ENCODE measurements at regions of chr1 and their contacts with region 1.

Region 1: DNA sequence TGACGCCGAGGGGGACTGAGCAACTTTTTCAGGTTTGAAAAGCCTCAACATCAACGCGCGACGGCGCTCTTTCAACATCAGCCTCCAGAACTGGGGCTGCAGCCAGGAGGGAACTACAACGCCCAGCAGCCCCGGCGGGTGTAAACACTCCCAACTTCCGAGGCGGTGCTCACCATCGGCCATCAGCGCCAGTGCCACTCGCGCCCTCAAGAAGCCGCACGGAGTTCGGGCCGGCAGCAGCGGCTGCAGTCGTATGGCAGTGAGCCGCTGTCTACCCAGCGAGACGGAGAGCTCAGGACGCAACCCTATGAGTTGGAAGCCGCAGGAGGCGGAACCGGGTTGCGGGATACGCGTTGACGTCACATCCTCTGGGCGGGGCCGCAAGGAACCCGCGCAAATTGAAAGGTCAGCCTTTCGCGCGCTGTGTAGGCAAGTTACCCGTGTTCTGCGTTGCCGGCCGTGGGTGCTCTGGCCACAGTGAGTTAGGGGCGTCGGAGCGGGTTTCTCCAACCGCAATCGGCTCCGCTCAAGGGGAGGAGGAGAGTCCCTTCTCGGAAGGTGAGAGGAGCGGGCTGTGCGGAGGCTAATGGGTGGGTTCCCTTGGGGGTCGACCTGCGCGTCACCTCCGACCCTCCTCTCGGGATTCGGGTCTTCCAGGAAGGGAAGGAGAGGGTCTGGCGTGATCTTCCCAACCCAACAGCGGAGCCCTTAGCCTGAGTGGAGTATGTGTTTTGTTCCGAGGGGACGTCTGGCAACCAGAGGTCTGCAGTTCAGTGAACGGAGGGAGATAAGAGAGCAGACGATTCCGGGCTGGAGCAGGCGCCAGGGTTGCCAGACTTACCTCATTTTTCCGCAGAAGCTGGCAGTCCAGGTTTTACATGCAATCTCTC is at the start of gene EXO1:
- DNase-seq: peak; percentile 83 to 98 (median 89)

Region 2: DNA sequence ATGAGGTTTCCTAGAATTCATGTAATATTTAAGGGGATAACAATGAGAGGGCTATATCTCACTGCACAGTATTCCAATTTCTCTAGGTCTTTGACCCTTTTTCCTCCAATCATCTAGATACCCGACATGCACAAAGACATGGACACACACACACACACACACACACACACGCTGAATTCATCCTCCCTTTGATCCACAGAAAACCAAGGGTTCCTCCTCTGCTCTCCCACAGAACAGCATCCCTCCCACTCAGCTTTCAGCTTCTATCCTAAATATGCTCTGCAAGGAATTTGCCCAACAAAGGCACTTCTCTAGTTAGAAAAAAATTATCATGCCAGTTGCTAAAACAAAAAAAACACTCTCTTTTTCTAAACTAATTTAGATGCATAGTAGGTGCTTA is 722.8 kb before region 1 on chr1:
- intact Hi-C with region 1: no loop called
- DNase-seq: no peak

Region 3: DNA sequence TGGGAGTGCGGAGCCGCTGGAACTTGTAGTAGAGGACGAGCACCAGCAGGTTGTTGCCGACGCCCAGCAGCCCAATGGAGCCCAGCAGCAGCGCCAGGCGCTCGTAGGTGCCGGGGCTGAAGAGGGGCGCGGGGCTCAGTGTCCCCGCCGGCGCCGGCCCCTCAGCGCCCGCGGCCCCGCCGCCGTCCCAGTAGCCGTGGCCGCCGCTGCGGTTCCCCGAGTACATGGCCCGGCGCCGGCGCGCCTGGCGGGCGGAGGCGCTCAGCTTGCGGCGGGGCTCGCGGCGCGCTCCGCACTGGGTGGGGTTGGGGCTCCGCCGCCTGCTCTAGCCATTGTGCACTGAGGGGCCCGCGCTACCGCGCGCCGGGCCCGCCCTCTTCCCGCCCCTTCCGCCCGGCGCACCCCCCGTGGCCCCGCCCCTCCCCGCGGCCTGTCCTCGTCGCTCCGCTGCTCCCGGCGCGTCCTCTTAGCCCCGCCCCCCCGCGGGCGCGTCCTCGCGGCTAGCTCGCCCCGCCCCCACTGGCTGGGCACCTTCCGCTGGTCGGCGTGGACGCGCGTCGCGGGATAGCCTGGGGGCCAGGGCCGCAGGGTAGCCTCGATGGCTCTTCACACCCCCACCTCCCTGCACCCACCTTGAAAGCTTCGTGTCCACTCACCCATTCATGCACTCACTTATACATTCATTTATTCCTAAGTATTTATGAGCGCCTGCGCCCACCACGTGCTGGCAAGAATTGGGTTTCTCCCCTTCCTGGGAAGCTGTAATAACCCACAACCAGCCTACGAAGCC is 207.8 kb before region 1 on chr1 and contains the starts of genes CHML and OPN3:
- intact Hi-C with region 1: loop called (anchors 5 kb)
- DNase-seq: peak; percentile 90 to 99 (median 94)